ENCODE measurements at regions of chr21 and their contacts with region 1.

Region 1: DNA sequence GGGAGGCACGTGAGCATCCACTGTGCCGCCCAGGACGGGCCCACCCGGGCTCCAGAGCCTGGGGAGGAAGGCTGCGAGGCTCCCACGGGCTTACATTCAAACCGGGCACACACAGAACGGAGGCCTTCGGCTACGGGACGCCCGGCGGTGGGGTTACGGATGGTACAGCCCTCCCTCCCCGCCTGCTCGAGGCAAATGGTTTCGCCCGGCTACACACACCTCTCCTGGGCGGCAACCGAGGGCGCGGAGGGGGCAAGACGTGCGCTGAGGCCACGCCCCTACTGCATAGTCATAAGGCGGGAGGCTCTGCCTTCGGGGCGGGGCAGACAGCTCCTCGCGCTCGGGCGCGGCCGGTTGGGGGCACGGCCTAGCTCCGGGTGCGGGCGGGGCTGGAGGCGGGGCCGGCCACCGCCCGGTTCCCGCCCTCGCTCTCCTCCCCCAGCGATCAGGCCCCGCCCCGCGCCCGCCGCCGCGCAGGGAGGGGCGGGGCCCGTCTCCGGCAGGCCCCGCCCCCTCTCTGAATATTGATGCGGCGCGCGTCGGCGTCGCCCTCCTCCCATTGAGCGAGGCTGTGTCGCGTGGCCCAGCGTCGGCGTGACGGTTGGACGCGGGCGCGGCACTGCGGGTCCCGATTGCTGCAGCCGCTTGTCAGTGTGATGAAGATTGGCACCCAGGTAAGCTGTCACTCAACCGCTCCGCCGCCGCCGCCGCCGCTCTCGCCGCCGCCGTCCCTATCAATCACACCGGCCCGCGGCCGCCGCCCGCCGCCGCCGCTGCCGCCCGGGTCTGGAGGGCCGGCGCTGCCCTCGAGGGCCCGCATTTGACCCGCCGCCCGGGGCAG is at the start of gene PKNOX1:
- DNase-seq: peak; percentile 98 to 100 (median 98)
- ATAC-seq: peak; percentile 89
- H3K4me3 ChIP-seq: peak within 1 kb of the TSS; percentile 77
- H3K27ac ChIP-seq: peak within 1 kb of the TSS; percentile 96
- H3K4me1 ChIP-seq: peaks cover 47 to 53% of the 10 kb centered on the region in 2 experiments
- H3K27me3 ChIP-seq: no peaks in the 10 kb centered on the region
- CTCF ChIP-seq: peak in 1 of 3 experiments; percentile 85; a peak in 2 of 6 replicates
- EP300 ChIP-seq: no peak
- POLR2A ChIP-seq: no peak; the same call in 1 of the 2 replicates
- RAD21 ChIP-seq: peak in 1 of 2 experiments; percentile 6; a peak in 1 of 4 replicates
- polyA plus RNA-seq, gene PKNOX1: 8.8 to 13.2 TPM

Region 2: GRCh38 chr21:42878993-42879787 is 95.0 kb before region 1 on chr21 and contains the start of gene WDR4:
- CTCF ChIA-PET with region 1: no interaction called
- POLR2A ChIA-PET with region 1: no interaction called
- in situ Hi-C with region 1: no loop called
- intact Hi-C with region 1: loop called (anchors 5 kb)
- DNase-seq: peak; percentile 99 to 100 (median 100)
- ATAC-seq: peak; percentile 96
- H3K4me3 ChIP-seq: peak within 1 kb of the TSS; percentile 76
- H3K27ac ChIP-seq: peak within 1 kb of the TSS; percentile 91
- H3K4me1 ChIP-seq: peaks cover 0 to 11% of the 10 kb centered on the region in 2 experiments; a peak in 2 of 5 replicates
- H3K27me3 ChIP-seq: no peaks in the 10 kb centered on the region
- CTCF ChIP-seq: peak in 1 of 3 experiments; percentile 5; a peak in 1 of 6 replicates
- EP300 ChIP-seq: no peak
- POLR2A ChIP-seq: peak; percentile 97
- RAD21 ChIP-seq: no peak
- polyA plus RNA-seq, gene WDR4: 5.4 to 26.3 TPM

Region 3: GRCh38 chr21:42892931-42893755 is 81.1 kb before region 1 on chr21 and contains the start of gene NDUFV3:
- CTCF ChIA-PET with region 1: no interaction called
- POLR2A ChIA-PET with region 1: interaction called, 6 read pairs
- in situ Hi-C with region 1: no loop called
- intact Hi-C with region 1: loop called (anchors 2 kb)
- DNase-seq: peak; percentile 99 to 100 (median 100)
- ATAC-seq: peak; percentile 97
- H3K4me3 ChIP-seq: peak within 1 kb of the TSS; percentile 88
- H3K27ac ChIP-seq: peak within 1 kb of the TSS; percentile 75
- H3K4me1 ChIP-seq: peaks cover 10 to 11% of the 10 kb centered on the region in 2 experiments; a peak in 4 of 5 replicates
- H3K27me3 ChIP-seq: no peaks in the 10 kb centered on the region
- CTCF ChIP-seq: no peak
- EP300 ChIP-seq: no peak
- POLR2A ChIP-seq: peak; percentile 99
- RAD21 ChIP-seq: peak in 1 of 2 experiments; percentile 4; a peak in 1 of 4 replicates
- polyA plus RNA-seq, gene NDUFV3: 19.1 to 23.6 TPM

Region 4: GRCh38 chr21:42923541-42924432 is 50.4 kb before region 1 on chr21:
- CTCF ChIA-PET with region 1: no interaction called
- POLR2A ChIA-PET with region 1: interaction called, 4 read pairs
- in situ Hi-C with region 1: no loop called
- intact Hi-C with region 1: loop called (anchors 2 kb)
- DNase-seq: peak; percentile 90 to 98 (median 94)
- ATAC-seq: peak; percentile 97
- H3K4me3 ChIP-seq: no peak overlapping the region
- H3K27ac ChIP-seq: peak overlapping the region; percentile 79
- H3K4me1 ChIP-seq: peaks cover 30 to 36% of the 10 kb centered on the region in 2 experiments
- H3K27me3 ChIP-seq: no peaks in the 10 kb centered on the region
- CTCF ChIP-seq: peak; percentile 89 to 97 (median 93)
- EP300 ChIP-seq: peak; percentile 69
- POLR2A ChIP-seq: peak; percentile 82
- RAD21 ChIP-seq: peak; percentile 99

Region 5: GRCh38 chr21:42962380-42963007 is 11.7 kb before region 1 on chr21:
- CTCF ChIA-PET with region 1: no interaction called
- POLR2A ChIA-PET with region 1: interaction called, 10 read pairs
- in situ Hi-C with region 1: no loop called
- intact Hi-C with region 1: no loop called
- DNase-seq: no peak
- ATAC-seq: no peak
- H3K4me3 ChIP-seq: no peak overlapping the region
- H3K27ac ChIP-seq: no peak overlapping the region
- H3K4me1 ChIP-seq: peaks cover 3 to 7% of the 10 kb centered on the region in 2 experiments
- H3K27me3 ChIP-seq: no peaks in the 10 kb centered on the region
- CTCF ChIP-seq: no peak
- EP300 ChIP-seq: no peak
- POLR2A ChIP-seq: no peak
- RAD21 ChIP-seq: no peak

Region 6: DNA sequence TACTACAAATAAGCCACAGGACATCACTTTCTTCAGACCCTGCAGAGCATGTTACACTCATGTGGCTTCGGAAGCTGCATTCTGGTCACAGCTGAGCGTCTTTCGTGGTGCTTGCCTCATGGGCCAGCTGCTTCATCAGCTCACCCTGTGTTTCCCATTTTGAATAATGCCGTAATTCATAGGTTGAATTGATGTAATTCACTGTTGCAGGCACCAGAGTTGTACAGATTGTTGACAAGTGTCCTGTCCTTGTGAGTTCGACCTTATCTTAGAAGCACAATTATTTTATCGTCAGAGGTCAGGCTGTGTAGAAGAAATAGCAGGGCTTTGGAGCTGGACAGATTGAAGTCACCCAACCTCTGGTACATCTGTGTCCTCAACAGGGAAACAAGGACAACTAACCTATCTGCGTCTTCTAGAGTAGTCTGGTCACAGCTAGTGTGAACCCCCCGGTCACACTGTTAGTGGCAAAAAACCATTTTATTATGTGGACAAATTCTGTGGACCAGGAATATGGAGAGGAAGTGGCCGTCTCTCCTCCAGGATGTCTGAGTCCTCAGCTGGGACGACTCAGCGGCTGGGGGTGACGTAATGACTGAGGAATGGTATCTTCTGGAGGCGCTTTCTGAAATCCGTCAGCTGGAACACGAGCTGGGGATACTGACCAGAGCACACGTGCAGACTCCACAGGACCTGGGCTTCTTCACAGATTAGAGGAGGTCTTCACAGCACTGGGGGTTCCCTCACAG is 18.0 kb after region 1 on chr21:
- CTCF ChIA-PET with region 1: no interaction called
- POLR2A ChIA-PET with region 1: interaction called, 105 read pairs
- in situ Hi-C with region 1: no loop called
- intact Hi-C with region 1: no loop called
- DNase-seq: peak; percentile 49 to 66 (median 57)
- ATAC-seq: peak; percentile 63
- H3K4me3 ChIP-seq: no peak overlapping the region
- H3K27ac ChIP-seq: peak overlapping the region; percentile 31; the same call in 2 of the 3 replicates
- H3K4me1 ChIP-seq: peaks cover 32 to 36% of the 10 kb centered on the region in 2 experiments
- H3K27me3 ChIP-seq: no peaks in the 10 kb centered on the region
- CTCF ChIP-seq: no peak
- EP300 ChIP-seq: 0 out of 2 replicates have a peak, but pooled peaks have one; percentile 25
- POLR2A ChIP-seq: no peak
- RAD21 ChIP-seq: no peak

Region 7: GRCh38 chr21:43015921-43016540 is 41.8 kb after region 1 on chr21:
- CTCF ChIA-PET with region 1: no interaction called
- POLR2A ChIA-PET with region 1: no interaction called
- in situ Hi-C with region 1: no loop called
- intact Hi-C with region 1: no loop called
- DNase-seq: no peak
- ATAC-seq: no peak
- H3K4me3 ChIP-seq: no peak overlapping the region
- H3K27ac ChIP-seq: no peak overlapping the region
- H3K4me1 ChIP-seq: no peaks in the 10 kb centered on the region
- H3K27me3 ChIP-seq: no peaks in the 10 kb centered on the region
- CTCF ChIP-seq: no peak
- EP300 ChIP-seq: no peak
- POLR2A ChIP-seq: no peak
- RAD21 ChIP-seq: no peak